ENCODE measurements at regions of chr13 and their contacts with region 1.

Region 1: DNA sequence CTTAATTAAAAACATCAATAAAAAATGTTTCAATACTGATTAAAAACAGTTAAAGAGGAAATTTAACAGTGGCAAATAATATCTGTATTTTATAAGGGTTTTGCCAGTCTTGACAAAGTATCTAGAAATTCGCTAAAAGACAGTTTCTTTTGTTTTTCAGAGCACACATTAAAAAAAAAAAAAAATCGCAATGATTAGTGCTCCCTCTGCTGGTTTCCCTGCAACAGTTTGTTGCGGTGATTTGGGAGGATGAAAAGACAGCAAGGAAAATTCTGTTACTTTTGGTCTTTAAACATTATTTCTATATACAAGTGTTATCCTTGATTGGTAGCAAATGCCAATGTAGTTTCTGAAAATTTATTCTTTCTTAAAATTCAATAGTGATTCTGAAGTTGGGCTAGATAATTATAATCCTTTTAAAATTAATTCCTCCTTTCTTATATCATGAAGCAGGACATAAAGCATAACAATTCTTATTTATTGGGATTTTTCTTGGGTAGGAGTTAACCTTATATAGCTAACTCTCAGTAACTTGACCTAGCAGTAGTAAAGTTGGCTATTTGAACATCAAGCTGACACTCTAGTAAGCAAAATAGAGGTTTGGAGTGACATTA is 23.1 kb upstream of the SPRY2 start:
- DNase-seq: no peak
- ATAC-seq: no peak
- H3K4me3 ChIP-seq: no peak overlapping the region
- H3K27ac ChIP-seq: no peak overlapping the region
- H3K4me1 ChIP-seq: peaks cover 3% of the 10 kb centered on the region
- H3K27me3 ChIP-seq: no peaks in the 10 kb centered on the region

Region 2: GRCh38 chr13:80551650-80552497 is 187.9 kb after region 1 on chr13:
- intact Hi-C with region 1: loop called in 1 of 4 experiments (anchors 10 kb)
- DNase-seq: no peak
- ATAC-seq: no peak
- H3K4me3 ChIP-seq: no peak overlapping the region
- H3K27ac ChIP-seq: no peak overlapping the region
- H3K4me1 ChIP-seq: peaks cover 2% of the 10 kb centered on the region
- H3K27me3 ChIP-seq: no peaks in the 10 kb centered on the region

Measured in right cardiac atrium (tissue), 5 donors.